Dendritic cell treated with granulocyte-macrophage colony-stimulating factor and Interleukin-4, amounts not matched to agents 40 ng/mL and 50 ng/mL, for 4 days (primary cell): ENCODE measurements at regions of chr2 and their contacts with region 1.

Region 1: DNA sequence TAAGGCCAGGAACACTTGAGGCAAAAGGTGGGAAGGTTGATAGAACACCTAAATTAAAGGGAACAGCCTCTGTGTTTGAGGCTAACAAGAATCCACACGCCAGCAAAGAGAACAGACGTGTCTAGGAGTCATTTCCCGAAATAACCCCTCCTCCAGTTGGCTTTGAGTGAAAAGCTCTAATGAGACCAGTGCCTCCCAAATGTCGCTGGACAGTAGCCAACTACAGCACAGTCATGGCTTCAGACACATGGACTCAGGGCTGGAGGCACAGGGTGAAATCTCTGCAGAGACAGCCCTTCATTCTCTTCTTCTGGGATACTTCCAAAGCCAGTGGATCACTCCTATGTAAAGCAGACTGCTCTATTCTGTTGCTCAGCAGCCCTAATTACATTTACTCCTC is 49.6 kb downstream of the SOWAHC start:
- H3K4me3 Mint-ChIP-seq: no peak overlapping the region
- H3K27ac Mint-ChIP-seq: no peak overlapping the region
- H3K4me1 Mint-ChIP-seq: no peaks in the 10 kb centered on the region
- H3K27me3 Mint-ChIP-seq: peaks cover 23% of the 10 kb centered on the region

Region 2: DNA sequence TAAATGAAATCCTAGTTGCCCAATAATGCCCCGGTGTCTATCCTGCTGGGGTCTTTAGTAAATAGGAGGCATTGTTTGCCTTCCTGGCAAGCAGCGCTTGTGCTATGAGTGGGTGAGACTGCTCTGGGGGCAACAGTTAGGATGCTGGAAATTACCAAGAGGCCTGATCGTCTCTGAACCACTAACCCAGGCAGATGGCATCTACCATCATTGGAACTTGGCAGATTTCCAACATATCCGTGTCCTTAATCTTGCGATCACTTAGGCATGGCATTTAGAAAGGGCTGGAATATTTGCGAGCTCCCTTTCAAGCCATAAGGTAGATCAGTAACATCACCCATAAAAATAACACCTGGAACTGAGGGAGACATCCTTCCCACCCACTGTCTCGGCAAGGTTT is 553.6 kb before region 1 on chr2:
- intact Hi-C with region 1: no loop called
- H3K4me3 Mint-ChIP-seq: no peak overlapping the region
- H3K27ac Mint-ChIP-seq: no peak overlapping the region
- H3K4me1 Mint-ChIP-seq: no peaks in the 10 kb centered on the region
- H3K27me3 Mint-ChIP-seq: peaks cover 2% of the 10 kb centered on the region

Region 3: GRCh38 chr2:109545828-109546713 is 117.7 kb before region 1 on chr2:
- intact Hi-C with region 1: loop called (anchors 2 kb)
- H3K4me3 Mint-ChIP-seq: no peak overlapping the region
- H3K27ac Mint-ChIP-seq: no peak overlapping the region
- H3K4me1 Mint-ChIP-seq: peaks cover 7% of the 10 kb centered on the region
- H3K27me3 Mint-ChIP-seq: peaks cover 2% of the 10 kb centered on the region